ENCODE measurements at regions of chr2 and their contacts with region 1.

Region 1: DNA sequence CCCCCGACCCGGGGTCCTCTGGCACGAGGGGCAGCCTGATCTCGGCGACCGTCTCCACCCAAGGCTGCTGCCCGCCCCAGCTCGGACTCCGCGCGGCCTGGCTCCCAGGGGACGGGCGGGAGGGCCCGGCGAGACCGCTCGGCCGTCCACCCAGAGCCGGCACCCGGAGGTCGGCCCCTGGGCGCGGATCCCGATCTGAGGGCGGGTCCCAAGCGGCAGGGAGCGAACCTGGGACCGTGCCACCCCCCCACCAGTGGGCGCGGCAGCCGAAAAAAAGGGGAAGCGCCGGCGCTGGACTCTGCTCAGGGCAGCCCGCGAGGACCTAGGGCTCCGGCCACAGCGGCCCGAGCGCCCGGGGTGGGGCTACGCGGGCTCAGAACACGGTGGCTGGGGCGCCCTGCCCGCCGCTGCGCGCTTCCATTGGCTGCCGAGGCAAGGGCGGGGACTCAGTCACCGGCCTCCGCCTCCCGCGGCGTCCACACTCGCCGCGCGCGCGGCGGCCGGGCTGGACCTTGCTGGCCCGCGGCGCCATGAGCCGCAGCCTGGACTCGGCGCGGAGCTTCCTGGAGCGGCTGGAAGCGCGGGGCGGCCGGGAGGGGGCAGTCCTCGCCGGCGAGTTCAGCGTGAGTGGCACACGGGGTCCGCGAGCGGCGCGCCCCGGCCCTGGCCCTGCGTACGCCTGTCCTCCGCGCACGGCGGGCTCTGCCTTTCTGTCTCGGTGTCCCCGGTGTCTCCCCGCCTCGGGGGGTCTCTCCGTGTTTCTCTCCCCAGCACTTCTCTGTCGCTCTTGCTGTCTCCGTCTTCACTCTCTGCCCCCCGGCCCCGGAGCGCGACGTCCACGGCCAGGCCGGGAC is at the start of gene PTPN18:
- DNase-seq: peak in 9 of 10 donors; percentile 23 to 58 (median 50)
- ATAC-seq: peak; percentile 86 to 91
- H3K4me3 Mint-ChIP-seq: peak within 1 kb of the TSS; percentile 73 to 88 (median 83)
- H3K27ac Mint-ChIP-seq: peak within 1 kb of the TSS in 9 of 10 donors; percentile 28 to 86 (median 71)
- H3K4me1 Mint-ChIP-seq: peaks cover 11 to 23% (median 13%) of the 10 kb centered on the region in 4 donors
- H3K27me3 Mint-ChIP-seq: no peaks in the 10 kb centered on the region
- polyA plus RNA-seq, gene PTPN18: 33.7 to 47.5 (median 33.9) TPM

Region 2: DNA sequence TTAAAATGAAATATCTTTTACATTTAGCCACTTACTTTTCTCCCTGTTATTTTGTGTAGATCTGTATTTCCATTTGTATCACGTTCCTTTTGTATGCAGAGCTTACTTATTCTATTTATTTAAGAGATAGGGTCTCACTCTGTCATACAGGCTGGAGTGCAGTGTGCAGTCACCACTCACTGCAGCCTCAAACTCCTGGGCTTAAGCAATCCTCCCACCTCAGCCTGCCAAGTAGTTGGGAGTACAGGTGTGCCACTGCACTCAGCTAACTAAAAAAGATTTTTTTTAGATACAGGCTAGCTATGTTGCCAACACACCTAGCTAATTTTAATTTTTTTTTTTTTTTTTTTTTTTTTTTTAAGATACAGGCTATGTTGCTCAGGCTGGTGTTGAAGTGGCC is 10.9 kb after region 1 on chr2:
- POLR2A ChIA-PET with region 1: interaction called, 11 read pairs
- DNase-seq: no peak
- ATAC-seq: no peak
- H3K4me3 Mint-ChIP-seq: no peak overlapping the region
- H3K27ac Mint-ChIP-seq: no peak overlapping the region
- H3K4me1 Mint-ChIP-seq: peaks cover 18 to 25% (median 22%) of the 10 kb centered on the region in 4 donors
- H3K27me3 Mint-ChIP-seq: peaks cover 0 to 6% (median 2%) of the 10 kb centered on the region in 5 donors